ENCODE measurements at regions of chr4 and their contacts with region 1.

Region 1: DNA sequence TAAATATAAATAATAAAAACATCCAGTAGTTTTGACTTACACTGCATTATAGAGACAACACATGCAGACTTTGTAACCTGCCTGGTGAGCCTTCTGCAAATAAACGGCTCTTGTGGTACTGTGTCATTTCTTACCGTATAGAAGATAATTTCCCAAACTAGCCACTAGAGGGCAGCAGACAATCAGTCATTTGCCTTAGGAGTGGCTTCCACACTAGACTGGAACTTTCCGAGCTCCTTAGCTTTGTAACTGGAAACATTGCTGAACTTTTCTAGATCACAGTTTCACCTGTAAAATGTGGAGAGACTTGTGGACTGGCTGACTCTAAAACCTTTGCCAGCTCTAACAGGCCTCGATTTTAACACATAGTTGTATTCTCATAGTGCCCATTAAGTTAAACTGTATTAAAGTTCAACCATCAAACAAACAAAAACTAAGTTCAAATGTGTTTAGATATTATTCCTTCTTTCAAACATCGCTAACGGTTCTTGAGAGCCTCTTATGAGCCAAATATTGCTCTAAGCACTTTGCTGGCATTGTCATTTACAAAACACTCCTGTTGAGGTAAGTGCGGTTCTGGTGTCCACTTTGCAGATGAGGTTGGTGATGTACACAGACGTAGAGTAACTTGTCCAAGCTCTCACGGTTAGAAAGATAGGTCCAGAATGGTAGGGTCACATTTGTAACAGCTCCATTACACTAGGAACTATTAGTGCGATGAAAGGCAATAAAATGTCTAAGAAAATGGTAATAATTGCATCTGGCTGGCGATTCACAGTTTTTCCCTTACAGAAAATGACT is 345.5 kb downstream of the ANK2 start:
- DNase-seq: peak; percentile 48
- H3K4me3 Mint-ChIP-seq: no peak overlapping the region
- H3K27ac Mint-ChIP-seq: no peak overlapping the region
- H3K4me1 Mint-ChIP-seq: no peaks in the 10 kb centered on the region
- H3K27me3 Mint-ChIP-seq: peaks cover 2% of the 10 kb centered on the region

Region 2: GRCh38 chr4:113316879-113317278 is 78.1 kb before region 1 on chr4:
- intact Hi-C with region 1: no loop called
- DNase-seq: peak; percentile 8
- H3K4me3 Mint-ChIP-seq: no peak overlapping the region
- H3K27ac Mint-ChIP-seq: no peak overlapping the region
- H3K4me1 Mint-ChIP-seq: peaks cover 11% of the 10 kb centered on the region
- H3K27me3 Mint-ChIP-seq: peaks cover 8% of the 10 kb centered on the region

Region 3: GRCh38 chr4:113446019-113446418 is 51.1 kb after region 1 on chr4:
- intact Hi-C with region 1: loop called (anchors 2 kb)
- DNase-seq: no peak
- H3K4me3 Mint-ChIP-seq: no peak overlapping the region
- H3K27ac Mint-ChIP-seq: peak overlapping the region; percentile 54
- H3K4me1 Mint-ChIP-seq: peaks cover 24% of the 10 kb centered on the region
- H3K27me3 Mint-ChIP-seq: no peaks in the 10 kb centered on the region

Region 4: GRCh38 chr4:113781439-113782040 is 386.6 kb after region 1 on chr4:
- intact Hi-C with region 1: loop called (anchors 1 kb)
- DNase-seq: no peak
- H3K4me3 Mint-ChIP-seq: no peak overlapping the region
- H3K27ac Mint-ChIP-seq: no peak overlapping the region
- H3K4me1 Mint-ChIP-seq: peaks cover 10% of the 10 kb centered on the region
- H3K27me3 Mint-ChIP-seq: no peaks in the 10 kb centered on the region

Region 5: GRCh38 chr4:113908829-113909228 is 513.9 kb after region 1 on chr4:
- intact Hi-C with region 1: loop called (anchors 1 kb)
- DNase-seq: no peak
- H3K4me3 Mint-ChIP-seq: no peak overlapping the region
- H3K27ac Mint-ChIP-seq: no peak overlapping the region
- H3K4me1 Mint-ChIP-seq: no peaks in the 10 kb centered on the region
- H3K27me3 Mint-ChIP-seq: peaks cover 2% of the 10 kb centered on the region

Region 6: GRCh38 chr4:114180481-114180880 is 785.6 kb after region 1 on chr4:
- intact Hi-C with region 1: loop called (anchors 2 kb)
- DNase-seq: no peak
- H3K4me3 Mint-ChIP-seq: no peak overlapping the region
- H3K27ac Mint-ChIP-seq: no peak overlapping the region
- H3K4me1 Mint-ChIP-seq: no peaks in the 10 kb centered on the region
- H3K27me3 Mint-ChIP-seq: no peaks in the 10 kb centered on the region

Region 7: DNA sequence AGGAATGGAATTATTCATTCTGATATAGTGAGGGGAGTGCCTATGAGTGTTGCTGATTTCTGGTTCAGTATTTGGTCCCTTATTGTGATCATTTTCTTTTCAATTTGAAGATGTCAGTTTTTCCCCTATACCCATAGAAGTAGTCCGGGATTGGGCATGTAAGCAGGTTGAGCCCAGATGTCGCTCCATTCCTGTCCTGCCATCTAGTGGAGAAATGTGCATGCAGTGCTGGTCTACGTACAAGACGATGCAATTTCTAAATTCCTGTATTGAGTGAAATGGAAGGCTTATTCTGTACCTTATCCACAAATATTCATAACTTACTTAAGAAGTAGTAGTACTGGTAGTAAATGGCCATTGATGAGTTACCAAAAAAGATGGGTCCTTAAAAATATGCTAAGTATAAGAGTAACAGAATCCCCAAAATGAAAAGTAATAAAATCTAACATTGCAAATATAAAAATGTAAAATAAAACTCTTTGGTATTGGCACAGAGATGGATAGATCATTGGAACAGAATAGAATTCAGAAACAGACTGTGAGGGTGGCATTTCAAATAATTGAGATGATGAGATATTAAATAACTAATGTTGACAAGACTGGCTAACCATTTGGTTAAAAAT is 1264.6 kb after region 1 on chr4:
- intact Hi-C with region 1: loop called (anchors 1 kb)
- DNase-seq: no peak
- H3K4me3 Mint-ChIP-seq: no peak overlapping the region
- H3K27ac Mint-ChIP-seq: no peak overlapping the region
- H3K4me1 Mint-ChIP-seq: no peaks in the 10 kb centered on the region
- H3K27me3 Mint-ChIP-seq: peaks cover 5% of the 10 kb centered on the region